PC-9 (cell line): ENCODE measurements at regions of chr3 and their contacts with region 1.

Region 1: DNA sequence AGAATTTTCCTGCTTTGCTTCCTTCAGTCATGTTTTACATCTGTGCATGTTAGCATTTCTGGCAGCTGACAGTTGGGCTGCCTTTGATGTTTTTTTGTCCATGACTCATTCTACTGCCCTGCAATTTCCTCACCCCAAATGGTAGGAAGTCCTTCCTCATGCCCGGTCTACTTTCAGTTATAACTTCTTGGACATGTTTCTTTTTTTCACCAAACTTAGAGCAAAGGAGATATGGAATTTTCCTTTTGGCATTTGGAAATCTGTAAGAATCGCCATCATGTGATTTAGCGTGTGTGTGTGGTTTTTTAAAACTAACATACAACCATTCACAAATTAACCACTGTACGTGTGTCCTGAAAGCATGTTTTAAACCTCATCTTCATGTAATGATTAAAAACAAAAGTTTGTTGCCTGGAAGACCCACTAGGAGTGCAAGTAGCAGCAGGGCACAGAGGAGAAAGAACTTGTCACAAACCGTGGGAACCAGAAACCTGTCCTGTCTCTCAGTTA is 430.7 kb upstream of the CFAP20DC start:
- DNase-seq: peak in 1 of 2 experiments; percentile 14
- H3K4me3 ChIP-seq: no peak overlapping the region
- H3K27ac ChIP-seq: no peak overlapping the region
- H3K4me1 ChIP-seq: peaks cover 20% of the 10 kb centered on the region
- H3K27me3 ChIP-seq: no peaks in the 10 kb centered on the region
- CTCF ChIP-seq: no peak

Region 2: GRCh38 chr3:59326246-59327024 is 154.1 kb before region 1 on chr3:
- CTCF ChIA-PET with region 1: no interaction called
- POLR2A ChIA-PET with region 1: no interaction called
- intact Hi-C with region 1: loop called (anchors 1 kb)
- DNase-seq: no peak
- H3K4me3 ChIP-seq: no peak overlapping the region
- H3K27ac ChIP-seq: 0 out of 2 replicates have a peak overlapping the region, but pooled peaks have one; percentile 37
- H3K4me1 ChIP-seq: peaks cover 9% of the 10 kb centered on the region; the same call in 1 of the 2 replicates
- H3K27me3 ChIP-seq: no peaks in the 10 kb centered on the region
- CTCF ChIP-seq: no peak

Region 3: DNA sequence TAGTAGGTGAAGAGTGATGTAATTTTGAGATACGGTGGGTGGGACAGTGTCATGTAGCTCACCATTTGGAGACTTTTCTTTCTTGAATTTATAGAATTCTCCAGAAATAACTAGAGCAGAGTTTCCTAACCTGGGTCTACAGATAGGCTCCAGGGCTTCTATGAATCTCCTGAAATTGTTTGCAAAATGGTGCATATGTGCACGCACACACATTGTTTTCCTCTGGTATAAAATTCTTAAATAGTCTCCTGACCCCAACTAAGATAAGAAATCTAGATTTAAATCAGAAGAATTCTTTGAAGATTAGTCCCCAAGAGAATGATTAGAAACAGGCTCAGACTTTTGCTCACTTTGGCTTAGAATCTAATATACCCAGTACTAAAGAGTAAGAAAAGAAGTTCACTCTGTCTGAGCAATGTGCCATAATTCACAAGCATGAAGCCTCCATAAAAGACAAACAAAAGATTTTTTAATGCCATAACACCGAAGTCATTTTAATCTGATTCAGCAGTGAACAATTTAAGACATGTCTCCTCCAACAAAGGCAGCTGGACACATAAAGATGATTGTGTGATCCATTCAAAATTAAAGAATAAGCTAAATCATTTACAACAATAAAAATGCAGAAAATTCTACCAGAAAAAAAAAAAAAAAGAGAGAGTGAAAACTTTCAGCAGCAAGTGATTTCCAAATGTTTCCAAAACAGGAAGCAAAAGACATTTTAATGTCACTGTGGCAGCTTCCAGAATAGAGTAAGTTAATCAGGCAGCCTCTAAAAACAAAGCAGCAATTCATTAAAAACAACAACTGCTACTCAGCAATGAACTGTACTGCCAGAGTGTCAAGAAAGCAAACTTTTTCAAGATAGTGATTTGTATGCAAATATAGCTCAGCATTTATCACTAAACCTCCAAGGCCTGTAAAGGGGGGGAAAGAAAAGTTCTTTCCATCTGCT is 544.8 kb after region 1 on chr3:
- CTCF ChIA-PET with region 1: no interaction called
- POLR2A ChIA-PET with region 1: interaction called, 26 read pairs
- intact Hi-C with region 1: no loop called
- DNase-seq: no peak
- H3K4me3 ChIP-seq: no peak overlapping the region
- H3K27ac ChIP-seq: no peak overlapping the region
- H3K4me1 ChIP-seq: no peaks in the 10 kb centered on the region
- H3K27me3 ChIP-seq: no peaks in the 10 kb centered on the region
- CTCF ChIP-seq: no peak